ENCODE measurements at regions of chr10 and their contacts with region 1.

Region 1: GRCh38 chr10:88114368-88114767 is 250.9 kb downstream of the PTEN start:
- DNase-seq: peak; percentile 48
- ATAC-seq: peak; percentile 79

Region 2: DNA sequence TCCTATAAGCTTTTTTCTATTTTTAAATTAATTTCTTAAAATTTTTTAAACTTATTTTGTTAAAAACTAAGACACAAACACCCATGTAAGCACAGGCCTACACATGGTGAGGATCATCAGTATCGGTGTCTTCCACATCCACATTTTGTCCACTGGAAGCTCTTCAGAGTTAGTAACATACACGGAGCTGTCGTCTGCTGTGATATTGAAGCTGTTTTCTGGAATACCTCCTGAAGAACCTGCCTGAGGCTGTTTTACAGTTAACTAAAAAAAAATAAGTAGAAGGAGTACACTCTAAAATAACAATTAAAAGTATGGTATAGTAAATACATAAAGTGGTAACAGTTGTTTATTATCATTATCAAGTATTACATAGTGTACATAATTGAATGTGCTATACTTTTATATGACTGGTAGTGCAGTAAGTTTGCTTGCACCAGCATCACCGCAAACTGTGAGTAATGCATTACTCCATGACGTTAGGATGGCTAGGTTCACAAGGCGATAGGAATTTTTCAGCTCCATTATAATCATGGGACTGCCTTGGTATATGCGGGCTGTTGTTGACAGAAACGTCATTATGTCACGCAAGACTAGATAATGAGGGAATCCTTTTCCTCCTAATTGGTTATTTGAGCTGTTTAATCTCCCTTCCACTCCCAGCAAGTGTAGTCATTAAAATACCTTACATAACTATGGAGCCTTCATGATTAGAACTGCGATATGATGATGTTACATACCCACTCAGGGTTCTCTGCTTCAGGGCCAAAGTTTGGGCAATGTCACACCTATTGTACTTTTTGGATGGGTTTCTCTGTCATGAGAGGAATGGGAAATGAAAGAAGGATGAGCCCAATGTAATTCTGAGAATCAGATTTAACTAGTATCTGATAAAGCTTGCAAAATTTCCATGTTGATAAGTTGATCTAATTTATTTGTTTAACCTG is 268.5 kb before region 1 on chr10:
- intact Hi-C with region 1: loop called (anchors 5 kb)
- DNase-seq: no peak
- ATAC-seq: peak; percentile 41